Activated CD4-positive, alpha-beta T cell treated with anti-CD3 and anti-CD28 coated beads for 36 hours (primary cell): ENCODE measurements at regions of chr15 and their contacts with region 1.

Region 1: GRCh38 chr15:88419830-88420229 is 47.4 kb downstream of the MRPL46 start:
- DNase-seq: no peak
- ATAC-seq: peak; percentile 97
- H3K4me3 Mint-ChIP-seq: no peak overlapping the region
- H3K27ac Mint-ChIP-seq: no peak overlapping the region
- H3K4me1 Mint-ChIP-seq: peaks cover 17% of the 10 kb centered on the region
- H3K27me3 Mint-ChIP-seq: peaks cover 31% of the 10 kb centered on the region

Region 2: GRCh38 chr15:88385078-88385700 is 34.6 kb before region 1 on chr15:
- CTCF ChIA-PET with region 1: no interaction called
- POLR2A ChIA-PET with region 1: no interaction called
- intact Hi-C with region 1: loop called in 1 of 2 experiments (anchors 1 kb)
- DNase-seq: peak; percentile 61
- ATAC-seq: peak; percentile 95
- H3K4me3 Mint-ChIP-seq: no peak overlapping the region
- H3K27ac Mint-ChIP-seq: no peak overlapping the region
- H3K4me1 Mint-ChIP-seq: peaks cover 10% of the 10 kb centered on the region
- H3K27me3 Mint-ChIP-seq: peaks cover 14% of the 10 kb centered on the region

Region 3: DNA sequence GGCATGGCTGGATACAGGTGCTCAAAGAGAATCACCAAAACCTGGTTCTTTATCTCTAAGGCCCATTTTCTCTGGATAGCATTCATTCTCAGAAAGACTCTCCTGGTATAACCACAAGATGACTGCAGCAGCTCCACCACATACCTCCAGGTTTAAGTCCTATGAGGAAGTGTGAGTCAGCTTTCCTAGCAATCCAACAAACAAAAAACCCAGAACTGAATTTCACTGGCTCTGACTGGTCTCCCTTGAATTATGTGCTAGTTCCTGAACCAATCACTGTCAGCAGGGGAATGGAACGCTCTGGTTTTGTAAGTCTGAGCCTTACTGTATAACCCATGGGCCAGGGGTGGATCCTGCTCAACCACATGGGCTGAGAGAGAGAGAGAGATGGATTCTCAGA is 20.2 kb after region 1 on chr15:
- CTCF ChIA-PET with region 1: interaction called, 3 read pairs
- POLR2A ChIA-PET with region 1: no interaction called
- intact Hi-C with region 1: loop called in 1 of 2 experiments (anchors 2 kb)
- DNase-seq: peak; percentile 12
- ATAC-seq: peak; percentile 63
- H3K4me3 Mint-ChIP-seq: no peak overlapping the region
- H3K27ac Mint-ChIP-seq: no peak overlapping the region
- H3K4me1 Mint-ChIP-seq: peaks cover 4% of the 10 kb centered on the region
- H3K27me3 Mint-ChIP-seq: peaks cover 36% of the 10 kb centered on the region

Region 4: DNA sequence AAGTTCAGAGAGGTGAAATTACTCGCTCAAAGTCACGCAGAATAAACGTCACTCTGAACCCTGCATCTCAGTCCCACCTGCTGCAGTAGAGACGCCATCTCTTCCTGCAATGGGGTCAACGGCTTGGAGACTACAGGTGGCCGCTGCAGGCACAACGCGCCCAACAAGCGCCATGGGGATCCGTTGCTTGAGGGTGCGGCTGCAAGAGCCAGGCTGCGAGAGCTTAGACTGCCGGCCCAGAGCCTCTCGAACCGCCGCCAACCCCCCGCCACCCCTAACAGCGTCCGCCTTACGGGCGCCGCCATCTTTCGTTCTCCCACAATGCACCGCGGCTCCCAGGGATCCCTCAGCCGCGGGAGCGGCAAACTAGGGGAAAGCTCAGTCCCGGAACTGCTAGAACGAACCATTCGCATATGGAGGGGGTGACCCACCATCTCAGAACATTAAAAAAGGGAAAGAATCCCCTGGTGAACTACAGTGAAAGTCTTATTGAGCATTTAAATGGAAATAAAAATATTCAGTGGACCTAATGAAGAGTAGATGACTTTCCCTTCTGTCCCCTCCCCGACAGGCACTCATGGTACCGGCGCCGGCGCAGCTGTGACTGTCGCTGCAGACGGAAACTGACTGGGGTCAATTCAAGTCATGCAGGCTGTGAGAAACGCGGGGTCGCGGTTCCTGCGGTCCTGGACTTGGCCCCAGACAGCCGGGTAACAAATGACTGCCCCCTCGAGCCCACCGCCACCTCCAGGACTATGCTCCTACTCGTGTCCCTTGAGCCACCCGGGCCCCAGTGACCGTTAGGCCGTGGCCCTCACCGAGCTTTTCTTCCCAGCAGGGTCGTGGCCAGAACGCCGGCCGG is 47.5 kb after region 1 on chr15 and contains the starts of genes MRPL46 and MRPS11:
- CTCF ChIA-PET with region 1: no interaction called
- POLR2A ChIA-PET with region 1: interaction called, 3 read pairs
- intact Hi-C with region 1: loop called in 1 of 2 experiments (anchors 1 kb)
- DNase-seq: peak; percentile 94
- ATAC-seq: peak; percentile 84
- H3K4me3 Mint-ChIP-seq: peak within 1 kb of the TSS; percentile 86
- H3K27ac Mint-ChIP-seq: peak within 1 kb of the TSS; percentile 98
- H3K4me1 Mint-ChIP-seq: peaks cover 26% of the 10 kb centered on the region
- H3K27me3 Mint-ChIP-seq: no peaks in the 10 kb centered on the region
- total RNA-seq, gene MRPL46: 31.0 to 35.6 TPM
- total RNA-seq, gene MRPS11: 58.3 to 67.1 TPM